Heart left ventricle (tissue), 16 donors: ENCODE measurements at regions of chr10 and their contacts with region 1.

Region 1: DNA sequence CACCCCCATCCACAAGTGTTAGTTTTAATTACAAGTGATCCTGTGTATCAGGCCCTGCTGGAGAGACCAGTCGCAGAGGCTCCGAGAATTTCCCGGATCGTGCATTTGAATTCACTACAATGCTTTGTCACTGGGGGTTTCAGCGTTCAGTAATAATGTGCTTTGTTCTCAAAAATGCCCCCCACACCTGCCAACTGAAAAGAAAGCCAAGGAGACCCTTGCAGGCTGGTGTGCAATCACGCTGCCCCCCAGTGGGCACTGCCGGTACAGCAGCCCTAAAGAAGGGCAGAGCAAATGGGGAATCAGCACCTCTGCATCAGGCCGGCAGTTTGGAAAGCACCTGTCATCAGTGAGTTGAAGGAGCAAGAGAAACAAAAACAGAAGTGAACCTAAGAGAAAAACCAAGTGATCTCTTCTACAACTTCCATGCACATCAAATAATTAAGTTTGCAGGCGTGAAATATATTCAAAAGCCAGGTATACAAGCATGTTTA is 177.6 kb downstream of the PARD3 start:
- DNase-seq: peak; percentile 28 to 75 (median 64)
- ATAC-seq: peak; percentile 25 to 72 (median 58)
- H3K4me3 ChIP-seq: no peak overlapping the region
- H3K27ac ChIP-seq: no peak overlapping the region
- H3K4me1 ChIP-seq: peaks cover 0 to 25% (median 17%) of the 10 kb centered on the region in 12 donors
- H3K27me3 ChIP-seq: no peaks in the 10 kb centered on the region
- CTCF ChIP-seq: peak; percentile 91 to 97 (median 94)
- POLR2A ChIP-seq: no peak

Region 2: DNA sequence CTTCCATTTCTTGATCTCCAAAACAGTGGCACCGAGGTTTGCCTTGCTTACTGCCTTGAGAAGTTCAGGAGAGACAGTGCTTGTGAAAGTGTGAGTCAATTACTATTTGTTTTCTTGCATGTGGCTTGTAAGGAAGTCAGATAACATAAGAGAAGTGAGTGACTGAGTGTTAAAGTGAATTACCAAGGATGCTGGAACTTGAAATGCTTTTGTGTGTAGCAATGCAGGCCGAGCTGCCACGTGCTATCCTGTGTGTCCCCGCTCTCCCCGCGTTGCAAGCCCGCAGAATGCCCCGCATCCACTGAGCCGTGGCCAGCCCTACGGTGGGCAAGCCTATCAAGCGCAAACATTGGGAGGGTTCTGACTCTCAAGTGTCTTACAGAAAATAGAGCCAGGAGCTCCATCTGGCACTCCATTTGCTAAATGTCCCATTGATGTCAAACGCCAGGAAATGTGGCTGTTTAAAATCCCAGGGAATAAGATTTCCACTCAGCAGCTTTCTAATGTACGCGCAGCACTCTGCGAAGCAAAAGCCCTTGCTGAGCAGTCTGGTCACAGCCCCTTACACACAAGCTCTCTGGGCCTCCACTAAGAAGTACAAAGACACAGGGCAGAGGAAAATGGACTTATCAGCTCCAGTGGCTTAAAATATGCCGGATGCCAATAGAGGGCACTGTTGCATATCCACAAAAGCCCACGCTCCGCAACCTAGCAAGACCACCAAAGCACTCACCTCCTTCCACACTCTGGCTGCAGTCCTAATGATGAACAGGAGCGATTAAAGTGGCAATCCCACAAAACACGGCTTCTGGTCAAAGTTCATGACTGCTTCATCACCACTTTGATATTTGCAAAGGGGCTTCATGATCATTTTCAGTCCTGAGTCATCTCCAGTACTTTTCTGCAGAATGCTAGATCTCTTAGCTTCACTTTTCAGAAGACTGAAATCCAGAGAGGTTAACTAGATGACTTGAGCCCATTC is 1521.4 kb before region 1 on chr10:
- intact Hi-C with region 1: loop called in 4 of 10 experiments (anchors 5 to 10 kb)
- DNase-seq: peak in 2 of 5 donors; percentile 29 to 44
- ATAC-seq: peak in 3 of 4 donors; percentile 41 to 67 (median 57)
- H3K4me3 ChIP-seq: no peak overlapping the region
- H3K27ac ChIP-seq: peak overlapping the region in 3 of 12 donors; percentile 20 to 73 (median 54)
- H3K4me1 ChIP-seq: peaks cover 0 to 67% (median 12%) of the 10 kb centered on the region in 12 donors
- H3K27me3 ChIP-seq: no peaks in the 10 kb centered on the region
- CTCF ChIP-seq: peak; percentile 39 to 71 (median 56)
- POLR2A ChIP-seq: no peak

Region 3: DNA sequence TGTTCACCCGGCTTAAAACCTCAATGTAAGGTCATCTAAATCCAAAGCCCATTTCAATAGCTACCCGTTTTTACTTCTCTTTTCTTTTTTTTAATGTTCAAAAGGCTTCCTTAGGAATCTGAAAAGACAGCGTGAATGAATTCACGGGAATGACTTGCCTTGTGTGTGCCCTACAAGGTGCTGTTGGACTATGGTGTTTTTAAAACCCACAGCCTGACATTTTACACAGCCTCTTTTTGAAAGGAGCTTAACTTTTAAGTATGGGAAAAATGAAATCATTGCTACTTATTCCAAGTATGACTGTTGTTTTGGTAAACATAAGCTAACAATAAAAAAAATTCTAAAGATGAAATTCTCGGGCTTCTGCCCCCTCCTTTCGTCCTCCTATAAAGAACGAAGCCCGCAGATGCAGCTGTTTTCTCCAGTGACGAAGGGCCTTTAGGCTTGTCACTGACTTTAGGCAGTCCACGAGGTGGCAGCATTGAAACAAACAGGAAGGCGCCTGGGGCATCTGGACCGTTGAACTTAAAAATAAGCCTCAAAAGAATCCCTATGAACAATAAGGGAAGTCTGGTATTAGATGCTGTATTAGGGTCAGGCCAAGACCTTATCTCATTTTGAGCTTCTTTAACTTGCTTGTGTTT is 1444.3 kb before region 1 on chr10:
- intact Hi-C with region 1: loop called in 9 of 10 experiments (anchors 5 to 10 kb)
- DNase-seq: peak; percentile 83 to 90 (median 85)
- ATAC-seq: peak; percentile 73 to 86 (median 82)
- H3K4me3 ChIP-seq: no peak overlapping the region
- H3K27ac ChIP-seq: peak overlapping the region; percentile 25 to 75 (median 52)
- H3K4me1 ChIP-seq: peaks cover 4 to 57% (median 41%) of the 10 kb centered on the region in 12 donors
- H3K27me3 ChIP-seq: no peaks in the 10 kb centered on the region
- CTCF ChIP-seq: peak; percentile 66 to 95 (median 83)
- POLR2A ChIP-seq: no peak

Region 4: DNA sequence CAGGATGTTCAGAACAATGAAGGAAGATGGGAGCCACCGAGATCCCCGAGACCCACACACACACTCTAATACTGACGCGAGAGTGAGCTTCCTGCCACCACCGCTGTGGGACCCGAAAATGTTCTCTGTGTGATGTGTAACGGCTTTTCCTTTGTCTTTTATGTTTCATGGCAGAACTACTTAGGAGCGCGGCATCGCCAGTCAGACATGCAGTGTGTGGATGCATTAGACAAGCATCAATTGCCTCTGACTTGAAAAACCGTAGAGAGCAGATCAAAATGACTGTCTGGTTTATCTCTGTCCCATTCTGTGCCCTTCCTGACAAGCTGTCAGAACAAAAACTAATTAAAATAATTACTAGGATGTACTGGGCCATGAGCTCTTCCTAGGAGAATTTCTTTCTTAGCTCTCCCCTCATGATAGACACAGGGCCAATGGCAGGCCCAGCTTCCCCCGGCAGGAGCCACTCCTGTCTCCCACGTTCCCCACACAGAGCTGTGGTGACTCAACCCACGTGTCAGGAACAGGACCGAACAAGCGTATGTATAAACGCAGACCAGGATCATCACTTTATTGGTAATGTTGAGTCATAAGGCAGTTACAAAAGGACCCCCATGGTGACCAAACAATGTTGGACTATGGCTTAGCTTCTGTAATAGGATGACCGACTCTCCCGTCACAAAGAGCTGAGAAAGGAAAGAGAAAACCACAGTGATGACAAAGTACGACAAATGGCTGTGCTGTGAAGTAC is 527.3 kb before region 1 on chr10:
- intact Hi-C with region 1: loop called in 1 of 10 experiments (anchors 10 kb)
- DNase-seq: no peak
- ATAC-seq: no peak
- H3K4me3 ChIP-seq: no peak overlapping the region
- H3K27ac ChIP-seq: no peak overlapping the region
- H3K4me1 ChIP-seq: no peaks in the 10 kb centered on the region
- H3K27me3 ChIP-seq: no peaks in the 10 kb centered on the region
- CTCF ChIP-seq: no peak
- POLR2A ChIP-seq: no peak

Region 5: DNA sequence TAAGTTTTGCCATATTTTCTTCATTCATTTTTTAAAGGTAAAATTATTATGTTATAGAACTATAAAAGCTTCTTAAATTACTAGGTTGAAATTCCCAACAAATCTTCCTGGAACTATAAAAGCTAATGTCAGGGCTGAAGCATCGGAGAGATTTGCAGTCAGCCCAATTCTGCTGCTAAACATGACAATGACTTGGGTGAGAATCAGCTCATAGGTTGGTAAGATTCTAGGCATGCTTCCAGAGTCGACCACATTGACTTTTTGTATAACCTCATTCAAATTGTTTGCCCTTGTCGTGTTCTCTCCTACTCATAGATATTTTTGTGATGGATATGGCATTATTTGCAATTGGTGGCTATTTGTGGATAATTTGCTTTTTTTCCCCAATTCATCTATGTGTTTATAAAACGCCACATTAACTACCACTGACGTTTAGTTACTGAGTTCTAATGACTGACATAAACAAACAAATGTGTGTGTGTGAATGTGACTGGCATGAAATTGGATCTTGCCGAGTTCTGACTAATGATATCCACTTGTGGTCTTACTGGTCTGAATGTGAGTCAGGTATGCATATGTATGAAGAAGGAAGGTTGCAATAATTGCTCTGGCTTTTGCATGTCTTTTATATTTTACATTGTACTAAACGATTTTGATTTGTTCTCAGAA is 402.2 kb before region 1 on chr10:
- intact Hi-C with region 1: loop called in 1 of 10 experiments (anchors 10 kb)
- DNase-seq: no peak
- ATAC-seq: no peak
- H3K4me3 ChIP-seq: no peak overlapping the region
- H3K27ac ChIP-seq: no peak overlapping the region
- H3K4me1 ChIP-seq: peaks cover 0 to 20% (median 5%) of the 10 kb centered on the region in 12 donors
- H3K27me3 ChIP-seq: no peaks in the 10 kb centered on the region
- CTCF ChIP-seq: no peak
- POLR2A ChIP-seq: no peak

Region 6: DNA sequence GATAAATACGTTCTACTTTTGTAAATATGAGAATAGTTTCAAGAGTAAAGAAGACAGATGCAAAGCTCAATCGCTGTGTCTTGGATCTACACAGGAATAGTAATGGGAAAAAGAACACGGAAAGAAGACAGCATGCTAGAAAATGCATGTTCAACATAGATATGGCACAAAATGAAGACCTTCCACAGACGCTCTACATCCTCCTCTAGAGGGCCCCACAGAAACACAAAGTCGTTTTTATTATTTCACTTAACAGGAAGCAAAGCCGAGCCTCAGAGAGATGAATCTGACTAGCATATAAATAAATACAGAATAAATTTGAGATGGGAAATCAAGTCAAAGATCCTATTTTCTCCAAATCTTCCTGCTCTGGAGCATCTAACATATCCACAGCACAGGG is 114.9 kb before region 1 on chr10:
- intact Hi-C with region 1: loop called in 9 of 10 experiments (anchors 2 to 5 kb)
- DNase-seq: no peak
- ATAC-seq: no peak
- H3K4me3 ChIP-seq: peak overlapping the region in 5 of 12 donors; percentile 10 to 26 (median 22)
- H3K27ac ChIP-seq: no peak overlapping the region
- H3K4me1 ChIP-seq: peaks cover 0 to 15% (median 6%) of the 10 kb centered on the region in 12 donors
- H3K27me3 ChIP-seq: no peaks in the 10 kb centered on the region
- CTCF ChIP-seq: peak in 11 of 12 donors; percentile 16 to 57 (median 34)
- POLR2A ChIP-seq: no peak

Region 7: DNA sequence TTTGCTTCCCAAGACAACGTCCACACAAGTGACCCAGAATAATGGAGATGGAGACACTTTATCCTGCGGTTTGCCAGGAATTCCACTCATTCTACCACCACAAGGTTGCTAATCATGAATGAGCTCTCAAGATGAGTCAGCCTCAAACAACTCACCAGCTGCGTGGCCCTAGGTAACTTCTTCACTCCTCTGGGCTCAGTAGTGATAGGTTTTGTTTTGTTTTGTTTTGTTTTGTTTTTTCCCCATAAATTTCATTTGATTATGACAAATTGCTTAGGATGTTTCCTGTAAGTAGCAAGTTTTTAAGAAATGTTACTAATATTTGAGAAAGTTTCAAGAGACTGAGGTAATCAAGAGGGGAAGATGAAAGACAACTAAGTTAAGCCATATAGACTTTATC is 109.1 kb before region 1 on chr10:
- intact Hi-C with region 1: loop called in 9 of 10 experiments (anchors 2 to 5 kb)
- DNase-seq: no peak
- ATAC-seq: peak in 1 of 4 donors; percentile 33
- H3K4me3 ChIP-seq: no peak overlapping the region
- H3K27ac ChIP-seq: no peak overlapping the region
- H3K4me1 ChIP-seq: peaks cover 0 to 32% (median 15%) of the 10 kb centered on the region in 12 donors
- H3K27me3 ChIP-seq: no peaks in the 10 kb centered on the region
- CTCF ChIP-seq: no peak
- POLR2A ChIP-seq: no peak